Activated CD4-positive, alpha-beta memory T cell treated with anti-CD3 and anti-CD28 coated beads for 36 hours (primary cell): ENCODE measurements at regions of chr10 and their contacts with region 1.

Region 1: DNA sequence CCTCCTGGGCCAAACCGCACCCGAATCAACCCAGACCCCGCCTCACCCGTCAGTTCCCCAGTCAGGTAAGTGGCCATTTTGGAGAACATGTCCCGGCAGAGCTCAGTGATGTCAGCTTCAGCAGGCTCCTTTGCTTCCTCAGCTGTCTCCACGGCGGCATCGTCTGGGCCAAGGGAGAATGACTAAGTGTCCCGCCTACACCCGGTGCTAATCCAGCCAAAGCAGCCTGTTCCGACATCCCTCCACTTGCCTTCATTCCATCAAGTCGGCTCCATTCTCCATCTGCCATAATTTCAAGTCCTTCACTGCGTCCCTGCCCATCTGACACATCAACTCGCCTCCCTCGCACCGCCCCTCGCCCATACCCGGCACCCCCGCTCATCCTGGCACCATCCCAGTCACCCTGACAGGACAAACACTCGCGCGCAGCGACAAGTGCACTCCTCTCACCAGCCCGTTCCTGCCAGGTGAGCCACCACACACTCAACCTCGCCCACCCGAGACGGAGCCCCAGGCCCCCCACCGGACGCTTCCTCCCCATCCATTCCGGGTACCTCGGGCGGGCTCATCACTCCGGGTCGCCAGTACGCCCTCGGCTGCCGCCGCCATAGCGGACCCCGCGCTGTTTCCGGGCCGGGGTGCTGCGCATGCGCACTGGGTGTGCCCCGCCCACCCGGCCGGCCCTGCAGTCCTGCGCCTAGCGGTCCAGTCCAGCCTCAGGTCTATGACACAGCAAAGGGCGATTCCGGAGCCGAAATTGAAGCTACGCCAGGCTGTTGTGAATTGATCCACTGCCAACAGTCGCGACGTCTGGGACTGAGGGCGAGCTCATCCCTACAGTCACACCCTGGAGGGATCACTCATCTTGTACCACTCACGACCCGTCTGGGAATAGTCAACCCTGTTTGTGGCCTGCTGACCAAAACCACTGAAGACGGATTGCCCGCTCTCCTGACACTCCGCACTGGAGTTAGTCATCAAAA is at the start of gene BLOC1S2:
- DNase-seq: peak; percentile 91
- H3K4me3 Mint-ChIP-seq: peak within 1 kb of the TSS; percentile 98
- H3K27ac Mint-ChIP-seq: peak within 1 kb of the TSS; percentile 99
- H3K4me1 Mint-ChIP-seq: peaks cover 23% of the 10 kb centered on the region
- H3K27me3 Mint-ChIP-seq: peaks cover 1% of the 10 kb centered on the region
- total RNA-seq, gene BLOC1S2: 50.5 to 51.5 TPM

Region 2: GRCh38 chr10:100148353-100149211 is 137.8 kb before region 1 on chr10:
- CTCF ChIA-PET with region 1: no interaction called
- POLR2A ChIA-PET with region 1: no interaction called
- intact Hi-C with region 1: loop called (anchors 2 kb)
- DNase-seq: peak; percentile 78
- H3K4me3 Mint-ChIP-seq: no peak overlapping the region
- H3K27ac Mint-ChIP-seq: peak overlapping the region; percentile 76
- H3K4me1 Mint-ChIP-seq: peaks cover 28% of the 10 kb centered on the region
- H3K27me3 Mint-ChIP-seq: peaks cover 3% of the 10 kb centered on the region

Region 3: GRCh38 chr10:100229819-100230422 is 56.4 kb before region 1 on chr10:
- CTCF ChIA-PET with region 1: no interaction called
- POLR2A ChIA-PET with region 1: no interaction called
- intact Hi-C with region 1: loop called (anchors 1 kb)
- DNase-seq: no peak
- H3K4me3 Mint-ChIP-seq: peak overlapping the region; percentile 88
- H3K27ac Mint-ChIP-seq: peak overlapping the region; percentile 81
- H3K4me1 Mint-ChIP-seq: peaks cover 25% of the 10 kb centered on the region
- H3K27me3 Mint-ChIP-seq: no peaks in the 10 kb centered on the region

Region 4: DNA sequence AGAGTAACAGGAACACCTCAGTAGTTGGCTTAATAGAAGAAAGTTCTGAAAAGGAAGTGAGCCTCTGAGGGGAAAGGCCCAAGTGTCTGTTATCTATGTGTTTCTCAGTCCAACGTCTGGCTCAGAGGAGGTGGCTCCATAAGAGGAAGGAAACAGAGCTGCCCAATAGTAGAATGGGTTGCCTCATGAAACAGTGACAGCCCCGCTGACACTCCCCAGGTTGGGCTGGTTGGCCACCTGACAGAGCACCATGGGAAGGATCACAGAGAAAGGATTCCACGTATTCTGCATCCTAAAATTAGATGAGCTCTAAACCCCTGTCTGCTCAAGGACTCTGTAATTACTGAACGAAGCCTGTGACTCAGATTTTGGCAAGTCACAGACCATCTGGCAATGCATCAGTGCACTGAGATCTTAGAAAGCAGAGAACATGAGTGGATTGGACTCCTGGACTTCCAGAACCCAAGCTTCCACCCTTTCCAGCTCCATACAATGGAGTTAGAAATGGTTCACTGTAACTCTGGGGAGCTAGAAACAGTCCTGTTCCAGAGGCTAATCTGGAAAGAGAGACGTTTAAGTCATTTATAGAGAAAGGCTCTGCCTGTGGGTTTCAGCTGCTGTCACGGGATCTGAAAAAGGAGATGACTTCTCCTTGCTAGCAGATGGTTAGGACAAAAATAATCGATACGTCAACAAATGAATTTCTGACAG is 40.8 kb after region 1 on chr10:
- CTCF ChIA-PET with region 1: no interaction called
- POLR2A ChIA-PET with region 1: no interaction called
- intact Hi-C with region 1: loop called (anchors 2 kb)
- DNase-seq: peak; percentile 64
- H3K4me3 Mint-ChIP-seq: no peak overlapping the region
- H3K27ac Mint-ChIP-seq: peak overlapping the region; percentile 55
- H3K4me1 Mint-ChIP-seq: peaks cover 12% of the 10 kb centered on the region
- H3K27me3 Mint-ChIP-seq: peaks cover 2% of the 10 kb centered on the region

Region 5: DNA sequence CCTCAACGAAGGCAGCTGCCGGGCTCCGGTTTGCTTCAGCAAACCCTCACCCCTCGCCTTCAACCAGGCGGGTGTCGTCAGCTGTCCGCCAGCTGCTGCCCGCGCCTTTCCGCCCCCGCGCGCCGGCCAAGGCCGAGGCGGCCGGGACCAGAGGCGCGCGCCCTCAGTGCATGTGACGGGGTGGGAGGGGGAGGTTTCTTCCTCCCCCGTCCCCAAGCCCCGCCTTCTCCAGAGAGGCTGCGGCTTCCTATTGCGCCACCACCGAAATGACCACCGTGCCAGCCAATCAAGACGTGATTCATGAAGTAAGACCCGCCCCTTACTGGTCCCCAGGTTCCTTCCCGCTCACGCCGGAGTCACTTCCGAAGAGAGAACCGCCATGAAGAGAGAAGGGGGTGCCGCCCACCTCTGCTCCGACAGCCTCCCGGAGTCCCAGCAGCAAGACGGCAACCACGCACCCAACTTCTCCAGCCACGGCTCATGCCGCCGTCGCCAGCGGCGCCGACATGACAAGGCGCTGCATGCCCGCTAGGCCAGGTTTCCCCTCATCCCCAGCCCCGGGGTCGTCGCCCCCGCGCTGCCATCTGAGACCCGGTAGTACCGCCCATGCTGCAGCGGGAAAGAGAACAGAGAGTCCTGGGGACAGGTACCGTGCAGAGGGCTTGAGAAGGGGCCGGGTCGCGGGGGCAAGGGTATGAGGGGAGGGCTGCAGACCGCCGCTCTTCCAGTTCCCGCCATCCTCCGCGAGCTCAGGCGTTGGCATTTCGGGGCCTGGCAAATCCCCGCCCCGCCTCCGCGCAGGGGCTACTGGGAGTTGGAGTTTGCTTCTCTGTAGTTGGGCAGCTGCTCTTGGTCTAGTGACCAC is 626.5 kb after region 1 on chr10 and contains the start of gene SLF2:
- CTCF ChIA-PET with region 1: no interaction called
- POLR2A ChIA-PET with region 1: no interaction called
- intact Hi-C with region 1: loop called (anchors 2 kb)
- DNase-seq: peak; percentile 97
- H3K4me3 Mint-ChIP-seq: peak within 1 kb of the TSS; percentile 99
- H3K27ac Mint-ChIP-seq: peak within 1 kb of the TSS; percentile 99
- H3K4me1 Mint-ChIP-seq: peaks cover 47% of the 10 kb centered on the region
- H3K27me3 Mint-ChIP-seq: no peaks in the 10 kb centered on the region
- total RNA-seq, gene SLF2: 33.9 to 35.9 TPM